Activated CD4-positive, alpha-beta memory T cell treated with anti-CD3 and anti-CD28 coated beads for 36 hours (primary cell): ENCODE measurements at regions of chr18 and their contacts with region 1.

Region 1: DNA sequence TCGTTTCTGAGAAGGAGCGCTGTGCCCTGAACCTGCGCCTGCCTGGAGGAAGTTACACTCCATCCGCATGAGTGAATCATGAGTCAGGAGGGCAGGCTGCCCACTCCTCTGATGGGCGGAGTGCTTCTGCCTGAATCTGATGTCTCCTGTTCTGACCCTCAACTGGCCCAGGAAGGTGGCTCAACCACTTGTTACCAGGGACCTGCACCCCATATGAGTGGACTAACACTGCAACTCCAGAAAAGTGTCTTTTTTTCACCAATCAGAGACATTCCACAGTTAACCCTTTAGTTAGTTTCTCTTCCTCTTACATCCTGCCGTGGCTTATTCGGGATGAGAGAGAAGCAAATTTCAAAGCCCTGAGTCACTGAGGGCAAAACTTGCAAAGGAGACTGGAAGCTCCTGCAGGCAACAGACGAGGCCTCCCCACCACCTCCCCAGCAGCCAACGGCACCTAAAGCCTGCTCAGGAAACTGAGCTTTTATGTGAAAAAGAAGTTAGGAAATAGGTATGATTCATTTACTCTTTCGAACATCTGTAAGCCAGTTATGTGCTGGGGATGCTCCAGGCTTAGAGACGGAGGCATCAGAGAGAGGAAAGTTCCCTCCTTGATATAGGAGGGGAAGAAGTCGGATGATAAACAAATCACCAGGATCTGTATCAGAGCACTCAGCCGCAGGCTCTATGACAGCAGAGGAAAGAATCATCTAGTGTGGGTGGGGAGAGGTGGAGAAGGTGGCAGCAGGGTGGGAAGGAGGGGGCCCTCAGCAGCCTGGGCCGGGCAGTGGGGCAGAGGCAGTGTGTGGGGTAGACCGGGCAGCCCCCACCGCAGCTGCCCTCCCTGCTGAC is 30.9 kb downstream of the MBP start:
- DNase-seq: peak; percentile 82
- H3K4me3 Mint-ChIP-seq: peak overlapping the region; percentile 72
- H3K27ac Mint-ChIP-seq: peak overlapping the region; percentile 100
- H3K4me1 Mint-ChIP-seq: peaks cover 94% of the 10 kb centered on the region
- H3K27me3 Mint-ChIP-seq: no peaks in the 10 kb centered on the region

Region 2: GRCh38 chr18:76859474-76860339 is 241.9 kb before region 1 on chr18:
- CTCF ChIA-PET with region 1: no interaction called
- POLR2A ChIA-PET with region 1: no interaction called
- intact Hi-C with region 1: loop called (anchors 1 kb)
- DNase-seq: peak; percentile 64
- H3K4me3 Mint-ChIP-seq: no peak overlapping the region
- H3K27ac Mint-ChIP-seq: peak overlapping the region; percentile 68
- H3K4me1 Mint-ChIP-seq: peaks cover 20% of the 10 kb centered on the region
- H3K27me3 Mint-ChIP-seq: no peaks in the 10 kb centered on the region

Region 3: DNA sequence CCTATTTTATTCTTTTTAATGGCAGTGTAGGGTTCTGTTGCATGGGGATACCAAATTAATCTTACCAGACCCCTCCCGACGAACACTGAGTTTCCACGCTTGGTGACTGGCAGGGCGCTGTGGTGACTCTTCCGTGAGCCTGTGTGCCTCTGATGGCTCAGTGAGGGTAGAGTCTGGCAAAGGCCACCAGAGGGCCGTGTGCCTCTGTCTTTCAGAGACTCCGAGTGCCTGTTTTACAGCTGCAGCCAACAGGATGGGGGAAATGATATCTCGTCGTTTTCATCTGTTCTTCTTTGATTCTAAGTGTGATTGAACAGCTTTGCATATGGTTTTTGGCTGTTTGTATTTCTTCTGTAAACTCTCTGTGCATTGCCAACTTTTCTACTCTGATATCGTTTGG is 179.5 kb before region 1 on chr18:
- CTCF ChIA-PET with region 1: no interaction called
- POLR2A ChIA-PET with region 1: no interaction called
- intact Hi-C with region 1: no loop called
- DNase-seq: peak; percentile 60
- H3K4me3 Mint-ChIP-seq: no peak overlapping the region
- H3K27ac Mint-ChIP-seq: no peak overlapping the region
- H3K4me1 Mint-ChIP-seq: peaks cover 12% of the 10 kb centered on the region
- H3K27me3 Mint-ChIP-seq: no peaks in the 10 kb centered on the region

Region 4: DNA sequence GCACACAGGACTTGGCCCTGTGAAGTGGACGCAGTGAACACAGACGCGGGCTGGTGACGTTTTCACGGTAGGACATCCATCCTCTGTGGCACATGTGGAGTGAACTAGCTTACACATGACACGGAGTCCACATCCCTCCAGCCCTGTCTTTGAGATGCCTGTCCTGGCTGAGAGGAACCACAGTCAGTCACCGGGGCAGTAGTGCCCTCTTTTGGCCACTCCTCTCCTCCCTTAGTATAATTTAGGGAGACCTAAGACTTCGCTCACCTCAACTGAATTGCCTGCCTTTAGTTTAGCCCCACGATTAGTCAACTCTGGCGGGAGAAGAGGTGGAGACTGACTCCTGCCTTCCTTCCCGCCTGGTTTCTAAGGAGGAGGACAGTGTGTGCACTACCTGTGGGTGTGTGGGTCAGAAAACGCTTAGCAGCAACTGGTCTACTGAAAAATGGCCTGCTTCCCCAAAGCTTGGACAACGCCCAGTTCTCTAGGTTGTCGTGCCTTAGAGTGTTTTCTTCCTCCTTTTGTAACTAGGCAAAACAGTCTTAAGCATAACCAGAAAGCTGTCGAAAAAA is 39.6 kb before region 1 on chr18:
- CTCF ChIA-PET with region 1: interaction called, 23 read pairs
- POLR2A ChIA-PET with region 1: interaction called, 68 read pairs
- intact Hi-C with region 1: loop called (anchors 1 kb)
- DNase-seq: peak; percentile 62
- H3K4me3 Mint-ChIP-seq: peak overlapping the region; percentile 58
- H3K27ac Mint-ChIP-seq: peak overlapping the region; percentile 100
- H3K4me1 Mint-ChIP-seq: peaks cover 85% of the 10 kb centered on the region
- H3K27me3 Mint-ChIP-seq: no peaks in the 10 kb centered on the region

Region 5: GRCh38 chr18:77086034-77086433 is 15.6 kb before region 1 on chr18:
- CTCF ChIA-PET with region 1: interaction called, 3 read pairs
- POLR2A ChIA-PET with region 1: no interaction called
- intact Hi-C with region 1: loop called (anchors 1 kb)
- DNase-seq: no peak
- H3K4me3 Mint-ChIP-seq: no peak overlapping the region
- H3K27ac Mint-ChIP-seq: peak overlapping the region; percentile 29
- H3K4me1 Mint-ChIP-seq: peaks cover 65% of the 10 kb centered on the region
- H3K27me3 Mint-ChIP-seq: no peaks in the 10 kb centered on the region

Region 6: GRCh38 chr18:77132371-77133050 is 30.9 kb after region 1 on chr18 and contains the start of gene MBP:
- CTCF ChIA-PET with region 1: interaction called, 10 read pairs
- POLR2A ChIA-PET with region 1: interaction called, 25 read pairs
- intact Hi-C with region 1: no loop called
- DNase-seq: peak; percentile 79
- H3K4me3 Mint-ChIP-seq: peak within 1 kb of the TSS; percentile 96
- H3K27ac Mint-ChIP-seq: peak within 1 kb of the TSS; percentile 93
- H3K4me1 Mint-ChIP-seq: peaks cover 44% of the 10 kb centered on the region
- H3K27me3 Mint-ChIP-seq: no peaks in the 10 kb centered on the region
- total RNA-seq, gene MBP: 38.9 to 40.4 TPM

Region 7: DNA sequence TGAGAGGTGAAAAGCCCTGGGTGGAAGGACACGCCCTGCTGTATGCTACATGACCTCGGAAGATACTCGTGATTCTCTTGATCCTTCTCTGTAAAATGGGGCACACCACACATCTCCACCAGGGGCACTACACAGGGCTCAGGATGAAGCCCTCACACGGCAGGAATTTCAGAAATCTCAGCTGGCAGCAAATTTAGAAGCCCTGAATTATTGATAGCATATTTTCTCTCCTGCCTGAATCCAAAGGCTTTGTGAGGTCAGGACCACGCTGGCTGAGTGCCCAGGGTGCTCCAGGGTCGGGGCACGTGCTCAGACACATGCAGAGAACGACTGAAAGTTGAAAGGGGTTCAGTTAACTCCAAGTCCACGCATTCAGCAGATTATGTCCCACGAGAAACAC is 105.9 kb after region 1 on chr18:
- CTCF ChIA-PET with region 1: interaction called, 6 read pairs
- POLR2A ChIA-PET with region 1: interaction called, 3 read pairs
- intact Hi-C with region 1: loop called (anchors 1 kb)
- DNase-seq: peak; percentile 74
- H3K4me3 Mint-ChIP-seq: no peak overlapping the region
- H3K27ac Mint-ChIP-seq: peak overlapping the region; percentile 76
- H3K4me1 Mint-ChIP-seq: peaks cover 32% of the 10 kb centered on the region
- H3K27me3 Mint-ChIP-seq: no peaks in the 10 kb centered on the region